ENCODE measurements at regions of chr15 and their contacts with region 1.

Region 1: GRCh38 chr15:65824031-65824743 is 32.1 kb upstream of the DENND4A start:
- DNase-seq: no peak
- ATAC-seq: peak; percentile 99
- H3K4me3 ChIP-seq: no peak overlapping the region
- H3K27ac ChIP-seq: no peak overlapping the region
- H3K4me1 ChIP-seq: no peaks in the 10 kb centered on the region
- H3K27me3 ChIP-seq: no peaks in the 10 kb centered on the region
- CTCF ChIP-seq: peak; percentile 90

Region 2: DNA sequence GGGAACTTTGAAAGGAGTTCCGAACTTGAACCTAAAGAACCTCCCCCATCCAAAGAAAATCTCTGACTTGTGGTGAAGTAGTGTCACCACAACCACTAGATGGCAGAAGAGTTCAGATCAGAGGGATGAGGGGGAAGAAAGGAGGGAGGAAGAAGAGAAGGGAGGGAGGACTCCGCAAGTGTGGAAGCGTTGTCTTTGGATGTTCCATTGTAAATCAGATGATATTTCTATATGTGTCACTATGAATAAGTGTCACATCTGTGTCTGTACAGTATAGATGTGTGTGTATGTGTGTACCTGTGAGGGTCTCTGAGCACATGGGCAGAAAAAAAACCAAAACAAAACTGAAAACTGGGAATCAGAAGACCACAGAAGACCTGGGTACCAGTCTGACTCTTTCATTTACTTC is 185.5 kb before region 1 on chr15:
- CTCF ChIA-PET with region 1: interaction called, 4 read pairs
- POLR2A ChIA-PET with region 1: no interaction called
- in situ Hi-C with region 1: no loop called
- intact Hi-C with region 1: loop called (anchors 10 kb)
- DNase-seq: peak; percentile 39
- ATAC-seq: peak; percentile 86
- H3K4me3 ChIP-seq: no peak overlapping the region
- H3K27ac ChIP-seq: no peak overlapping the region
- H3K4me1 ChIP-seq: peaks cover 6% of the 10 kb centered on the region; the same call in 1 of the 2 replicates
- H3K27me3 ChIP-seq: no peaks in the 10 kb centered on the region
- CTCF ChIP-seq: peak; percentile 86

Region 3: DNA sequence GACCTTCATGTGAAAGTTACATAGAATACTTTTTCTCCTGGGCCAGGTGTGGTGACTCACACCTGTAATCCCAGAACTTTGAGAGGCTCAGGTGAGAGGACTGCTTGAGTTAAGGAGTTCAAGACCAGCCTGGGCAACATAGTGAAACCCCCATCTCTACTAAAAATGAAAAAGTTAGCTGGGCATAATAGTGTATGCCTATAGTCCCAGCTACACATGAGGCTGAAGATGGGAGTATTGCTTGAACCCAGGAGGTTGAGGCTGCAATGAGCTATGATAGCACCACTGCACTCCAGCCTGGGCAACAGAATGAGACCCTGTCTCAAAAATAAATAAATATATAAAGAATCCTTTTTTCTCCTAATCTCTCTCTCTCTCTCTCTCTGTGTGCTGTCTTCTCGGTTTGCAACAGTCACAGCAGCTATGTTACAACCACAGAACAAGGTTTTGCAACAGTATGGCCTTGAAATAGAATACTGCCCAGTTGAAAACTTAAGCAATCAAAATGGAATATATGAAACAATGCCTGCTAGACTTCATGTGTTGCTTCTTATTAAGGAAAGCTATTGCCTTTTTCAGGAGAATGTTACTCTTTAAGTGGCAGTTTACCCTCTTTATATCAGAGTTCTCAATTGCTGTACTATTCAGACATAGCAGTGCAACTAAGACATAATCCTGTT is 19.8 kb before region 1 on chr15:
- CTCF ChIA-PET with region 1: no interaction called
- POLR2A ChIA-PET with region 1: no interaction called
- in situ Hi-C with region 1: no loop called
- intact Hi-C with region 1: no loop called
- DNase-seq: no peak
- ATAC-seq: no peak
- H3K4me3 ChIP-seq: no peak overlapping the region
- H3K27ac ChIP-seq: no peak overlapping the region
- H3K4me1 ChIP-seq: no peaks in the 10 kb centered on the region
- H3K27me3 ChIP-seq: no peaks in the 10 kb centered on the region
- CTCF ChIP-seq: no peak

Region 4: GRCh38 chr15:65862682-65863081 is 38.5 kb after region 1 on chr15:
- CTCF ChIA-PET with region 1: interaction called, 11 read pairs
- POLR2A ChIA-PET with region 1: no interaction called
- in situ Hi-C with region 1: no loop called
- intact Hi-C with region 1: no loop called
- DNase-seq: no peak
- ATAC-seq: peak; percentile 95
- H3K4me3 ChIP-seq: no peak overlapping the region
- H3K27ac ChIP-seq: no peak overlapping the region
- H3K4me1 ChIP-seq: no peaks in the 10 kb centered on the region
- H3K27me3 ChIP-seq: no peaks in the 10 kb centered on the region
- CTCF ChIP-seq: peak; percentile 72

Region 5: GRCh38 chr15:66080717-66081398 is 256.7 kb after region 1 on chr15:
- CTCF ChIA-PET with region 1: no interaction called
- POLR2A ChIA-PET with region 1: interaction called, 12 read pairs
- in situ Hi-C with region 1: no loop called
- intact Hi-C with region 1: no loop called
- DNase-seq: no peak
- ATAC-seq: peak; percentile 86
- H3K4me3 ChIP-seq: no peak overlapping the region
- H3K27ac ChIP-seq: no peak overlapping the region
- H3K4me1 ChIP-seq: peaks cover 9% of the 10 kb centered on the region; the same call in 1 of the 2 replicates
- H3K27me3 ChIP-seq: no peaks in the 10 kb centered on the region; the same call in 1 of the 2 replicates
- CTCF ChIP-seq: no peak; the same call in 1 of the 2 replicates

Measured in Panc1 (cell line).